ENCODE measurements at regions of chr12 and their contacts with region 1.

Region 1: DNA sequence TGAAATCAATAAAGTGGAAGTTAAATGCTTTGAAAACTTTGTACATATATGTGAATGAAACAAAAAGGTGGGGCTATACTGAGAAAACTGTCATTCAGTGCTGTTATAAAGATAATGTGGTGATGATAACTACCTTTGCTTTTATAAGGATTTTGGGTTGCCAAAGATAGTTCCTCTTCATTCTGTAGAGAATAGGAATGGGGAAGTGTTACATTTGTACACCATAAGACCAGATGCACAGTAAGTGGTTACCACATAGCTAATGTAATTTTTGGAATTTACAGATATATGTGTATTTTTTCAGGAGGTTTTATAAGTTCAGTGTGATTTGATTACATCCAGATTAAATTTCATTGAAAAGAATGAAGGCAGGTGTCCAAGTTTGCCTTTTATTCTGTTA is 18.1 kb downstream of the RAB21 start:
- DNase-seq: no peak
- ATAC-seq: no peak
- H3K4me3 ChIP-seq: no peak overlapping the region
- H3K27ac ChIP-seq: no peak overlapping the region
- H3K4me1 ChIP-seq: peaks cover 2 to 50% (median 28%) of the 10 kb centered on the region in 12 donors
- H3K27me3 ChIP-seq: no peaks in the 10 kb centered on the region
- CTCF ChIP-seq: no peak
- POLR2A ChIP-seq: no peak

Region 2: DNA sequence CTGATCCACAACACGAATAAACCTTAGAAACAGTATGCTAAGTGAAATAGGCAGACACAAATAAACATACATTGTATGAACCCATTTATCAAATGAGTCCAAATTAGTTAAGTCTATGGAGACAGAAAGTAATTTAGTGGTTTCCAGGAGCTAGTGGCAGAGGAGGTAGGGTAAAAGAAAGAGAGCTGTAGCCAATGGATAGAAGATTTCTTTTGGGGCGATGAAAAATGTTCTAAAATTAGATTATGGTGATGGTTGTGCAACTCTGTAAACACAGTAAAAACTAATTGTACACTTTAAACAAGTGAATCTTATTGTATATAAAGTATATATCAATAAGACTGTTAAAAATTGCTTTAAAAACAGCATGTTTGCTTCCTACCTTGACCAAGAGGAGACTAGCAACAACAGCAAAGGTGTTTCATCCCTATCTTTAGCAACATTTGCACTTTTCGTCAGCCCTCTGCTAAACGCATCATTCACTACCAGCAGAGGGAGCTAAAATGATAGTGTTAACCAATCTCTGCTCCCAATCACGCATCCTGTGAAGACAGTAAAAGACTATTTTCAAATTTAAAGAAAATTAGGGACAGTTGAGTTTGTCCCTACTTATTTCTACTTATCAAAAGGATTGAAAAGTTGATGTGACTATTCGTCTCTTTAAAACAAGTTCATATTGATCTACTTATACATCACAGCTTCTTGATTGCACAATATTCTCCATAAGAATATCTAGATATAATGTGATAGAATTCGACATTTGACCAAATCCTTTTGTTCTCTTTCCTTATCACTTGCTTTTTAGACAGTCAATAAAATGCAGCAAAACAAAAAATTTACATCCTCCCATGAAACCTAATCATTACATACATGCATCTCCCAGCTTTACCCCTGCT is 357.2 kb before region 1 on chr12:
- intact Hi-C with region 1: no loop called
- DNase-seq: no peak
- ATAC-seq: peak in 3 of 4 donors; percentile 44 to 71 (median 55)
- H3K4me3 ChIP-seq: no peak overlapping the region
- H3K27ac ChIP-seq: no peak overlapping the region
- H3K4me1 ChIP-seq: no peaks in the 10 kb centered on the region
- H3K27me3 ChIP-seq: peaks cover 0 to 3% (median 0%) of the 10 kb centered on the region in 9 donors
- CTCF ChIP-seq: peak; percentile 51 to 79 (median 72)
- POLR2A ChIP-seq: no peak

Region 3: DNA sequence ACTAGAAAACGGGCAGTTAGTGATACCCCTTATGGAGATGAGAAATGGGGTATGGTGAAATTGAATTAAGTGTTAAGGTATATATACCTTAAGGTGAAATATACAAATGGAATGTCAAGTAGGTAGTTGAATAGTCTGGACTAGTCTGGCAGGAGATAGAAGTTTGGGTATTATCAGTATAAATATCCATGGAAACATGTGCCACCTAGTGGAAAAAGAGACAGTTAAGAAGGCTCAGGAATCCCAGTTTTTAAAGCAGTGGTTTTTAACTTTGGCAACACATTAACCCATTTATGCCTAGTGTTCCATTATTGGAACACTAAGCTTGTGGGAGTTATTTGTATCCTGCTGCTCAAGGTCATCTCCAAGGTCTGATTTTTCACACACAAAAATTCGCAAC is 127.4 kb after region 1 on chr12:
- intact Hi-C with region 1: loop called in 4 of 10 experiments (anchors 10 kb)
- DNase-seq: no peak
- ATAC-seq: no peak
- H3K4me3 ChIP-seq: no peak overlapping the region
- H3K27ac ChIP-seq: no peak overlapping the region
- H3K4me1 ChIP-seq: peaks cover 0 to 9% (median 0%) of the 10 kb centered on the region in 12 donors
- H3K27me3 ChIP-seq: no peaks in the 10 kb centered on the region
- CTCF ChIP-seq: peak in 6 of 12 donors; percentile 9 to 34 (median 23)
- POLR2A ChIP-seq: no peak

Measured in heart left ventricle (tissue), 16 donors.